ENCODE measurements at regions of chr10 and their contacts with region 1.

Region 1: GRCh38 chr10:31526681-31527080 is 207.7 kb downstream of the ZEB1 start:
- DNase-seq: no peak
- ATAC-seq: no peak

Region 2: DNA sequence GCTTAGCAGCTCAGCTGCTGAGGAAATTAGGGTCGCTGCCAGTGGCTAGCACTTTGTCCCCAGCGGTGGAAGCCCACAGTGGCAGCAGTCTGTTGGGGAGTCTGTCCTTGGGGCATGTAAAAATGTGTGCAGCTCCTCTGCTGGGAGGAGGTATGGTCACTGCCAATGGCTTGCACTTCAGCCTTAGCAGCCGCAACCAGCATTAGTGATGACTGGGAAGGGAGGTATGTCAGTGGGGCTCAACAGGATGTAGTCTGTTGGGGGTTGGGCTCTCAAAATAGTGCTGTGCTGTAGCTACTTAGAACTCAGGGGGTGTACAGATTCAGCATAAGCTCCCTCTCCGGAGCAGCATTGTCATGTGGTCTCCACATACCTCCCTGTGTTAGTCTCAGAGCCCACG is 17.8 kb before region 1 on chr10:
- intact Hi-C with region 1: loop called (anchors 1 kb)
- DNase-seq: no peak
- ATAC-seq: no peak

Region 3: GRCh38 chr10:31759799-31760626 is 233.3 kb after region 1 on chr10:
- intact Hi-C with region 1: loop called (anchors 10 kb)
- DNase-seq: peak; percentile 98
- ATAC-seq: peak; percentile 96